HEK293 (cell line): ENCODE measurements at regions of chr3 and their contacts with region 1.

Region 1: DNA sequence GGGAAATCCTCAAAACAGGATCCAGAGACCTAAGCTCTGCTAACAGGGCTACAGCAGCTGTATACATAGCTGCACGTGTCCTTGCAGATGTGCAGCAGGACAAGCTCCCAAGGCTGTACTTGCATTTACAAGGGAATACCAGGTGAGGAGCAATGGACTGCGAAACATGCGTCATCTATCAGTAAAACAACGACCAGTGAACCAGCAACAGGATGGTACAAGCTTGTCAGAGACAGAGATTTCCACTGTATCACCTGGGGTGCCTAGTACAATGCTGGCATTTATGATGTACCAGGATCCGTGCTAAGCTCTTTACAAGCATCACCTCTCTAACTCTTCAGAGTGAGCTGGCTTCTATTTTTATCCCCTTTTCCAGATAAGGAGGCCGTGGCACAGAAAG is 227.3 kb downstream of the FOXP1 start:
- H3K4me3 ChIP-seq: no peak overlapping the region
- H3K27ac ChIP-seq: no peak overlapping the region
- H3K4me1 ChIP-seq: no peaks in the 10 kb centered on the region
- CTCF ChIP-seq: no peak

Region 2: GRCh38 chr3:71369701-71370391 is 13.6 kb after region 1 on chr3:
- CTCF ChIA-PET with region 1: no interaction called
- POLR2A ChIA-PET with region 1: interaction called, 10 read pairs
- H3K4me3 ChIP-seq: no peak overlapping the region
- H3K27ac ChIP-seq: no peak overlapping the region
- H3K4me1 ChIP-seq: peaks cover 3% of the 10 kb centered on the region
- CTCF ChIP-seq: no peak